Activated CD4-positive, alpha-beta memory T cell treated with anti-CD3 and anti-CD28 coated beads, Interleukin-2, amount 10 ng/mL, durations not matched to agents 7 days and 5 days (primary cell): ENCODE measurements at regions of chr17 and their contacts with region 1.

Region 1: GRCh38 chr17:77391668-77392375 is 251.1 kb downstream of the SEC14L1 start:
- DNase-seq: peak; percentile 83
- H3K4me3 Mint-ChIP-seq: peak overlapping the region; percentile 66
- H3K27ac Mint-ChIP-seq: peak overlapping the region; percentile 85
- H3K4me1 Mint-ChIP-seq: peaks cover 83% of the 10 kb centered on the region
- H3K27me3 Mint-ChIP-seq: no peaks in the 10 kb centered on the region

Region 2: GRCh38 chr17:77372444-77373298 is 19.2 kb before region 1 on chr17:
- CTCF ChIA-PET with region 1: interaction called, 31 read pairs
- POLR2A ChIA-PET with region 1: interaction called, 120 read pairs
- DNase-seq: peak; percentile 81
- H3K4me3 Mint-ChIP-seq: peak overlapping the region; percentile 74
- H3K27ac Mint-ChIP-seq: peak overlapping the region; percentile 82
- H3K4me1 Mint-ChIP-seq: peaks cover 51% of the 10 kb centered on the region
- H3K27me3 Mint-ChIP-seq: peaks cover 3% of the 10 kb centered on the region